BJ (cell line): ENCODE measurements at regions of chr21 and their contacts with region 1.

Region 1: GRCh38 chr21:45130324-45130774 is 56.0 kb downstream of the ADARB1 start:
- DNase-seq: peak; percentile 47
- H3K4me3 ChIP-seq: peak overlapping the region; percentile 9; the same call in 1 of the 2 replicates
- H3K27me3 ChIP-seq: no peaks in the 10 kb centered on the region
- CTCF ChIP-seq: no peak

Region 2: GRCh38 chr21:44949779-44950198 is 180.6 kb before region 1 on chr21:
- CTCF ChIA-PET with region 1: interaction called, 237 read pairs
- POLR2A ChIA-PET with region 1: no interaction called
- DNase-seq: no peak
- H3K4me3 ChIP-seq: no peak overlapping the region
- H3K27me3 ChIP-seq: no peaks in the 10 kb centered on the region
- CTCF ChIP-seq: peak; percentile 91

Region 3: GRCh38 chr21:44958471-44959191 is 171.7 kb before region 1 on chr21:
- CTCF ChIA-PET with region 1: interaction called, 237 read pairs
- POLR2A ChIA-PET with region 1: interaction called, 4 read pairs
- DNase-seq: no peak
- H3K4me3 ChIP-seq: no peak overlapping the region
- H3K27me3 ChIP-seq: no peaks in the 10 kb centered on the region
- CTCF ChIP-seq: no peak

Region 4: DNA sequence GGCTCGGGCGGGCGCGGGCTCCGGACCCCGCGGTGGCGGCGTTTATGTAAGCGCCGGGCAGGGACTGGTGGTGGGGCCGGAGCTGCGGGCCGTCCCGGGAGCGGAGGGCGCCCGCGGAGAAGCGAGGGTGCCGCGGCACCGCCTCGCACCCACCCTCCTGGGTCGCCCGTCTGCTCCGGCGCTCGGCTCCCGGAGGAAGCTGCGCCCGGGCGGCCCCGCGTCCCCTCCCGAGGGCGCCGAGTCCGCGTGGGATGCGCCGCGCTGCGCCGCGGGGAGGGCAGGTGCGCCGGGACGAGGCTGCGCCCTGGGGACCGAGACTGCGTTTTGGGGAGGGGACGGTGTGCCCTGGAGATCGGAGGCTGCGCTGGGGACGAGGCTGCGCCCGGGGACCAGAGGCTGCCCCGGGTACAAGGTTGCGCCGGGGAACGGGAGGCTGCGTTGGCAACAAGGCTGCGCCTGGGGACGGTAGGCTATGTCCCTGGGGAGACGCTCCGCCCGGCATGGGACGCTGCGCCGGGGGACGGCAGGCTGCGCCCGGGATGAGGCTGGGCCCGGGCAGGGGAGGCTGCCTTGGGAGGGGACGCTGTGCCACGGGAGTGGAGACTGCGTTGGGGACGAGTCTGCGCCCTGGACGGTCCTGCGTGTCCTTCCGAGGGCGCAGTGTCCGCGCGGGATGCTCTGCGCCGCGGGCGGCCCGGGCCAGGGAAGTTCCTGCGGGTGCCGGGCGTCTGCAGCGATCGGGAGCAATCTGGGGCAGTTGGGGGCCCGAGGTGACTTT is 55.3 kb before region 1 on chr21:
- CTCF ChIA-PET with region 1: interaction called, 22 read pairs
- POLR2A ChIA-PET with region 1: no interaction called
- DNase-seq: no peak
- H3K4me3 ChIP-seq: peak overlapping the region; percentile 79
- H3K27me3 ChIP-seq: no peaks in the 10 kb centered on the region
- CTCF ChIP-seq: no peak

Region 5: DNA sequence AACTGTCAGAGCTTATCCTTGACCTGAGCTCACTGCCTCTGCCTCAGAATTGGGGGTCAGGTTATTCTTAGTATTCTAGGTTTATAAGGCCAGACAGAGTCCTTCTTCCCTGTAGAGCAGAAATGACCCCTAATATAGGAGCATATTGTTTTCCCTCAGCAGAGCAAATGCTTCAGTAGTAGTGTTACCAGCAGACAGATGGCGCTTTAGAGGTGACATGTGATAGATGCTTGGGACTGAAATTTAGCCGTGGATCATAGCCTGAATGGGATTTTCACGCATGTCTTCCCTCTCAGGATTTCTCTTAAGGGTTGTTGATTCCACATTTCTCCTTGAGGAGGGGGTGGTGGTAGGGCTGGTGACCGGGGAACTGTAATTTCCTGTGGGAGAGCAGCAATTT is 31.5 kb before region 1 on chr21:
- CTCF ChIA-PET with region 1: interaction called, 11 read pairs
- POLR2A ChIA-PET with region 1: no interaction called
- DNase-seq: no peak
- H3K4me3 ChIP-seq: no peak overlapping the region
- H3K27me3 ChIP-seq: no peaks in the 10 kb centered on the region
- CTCF ChIP-seq: peak; percentile 43